Psoas muscle (tissue), 8 donors: ENCODE measurements at regions of chr7 and their contacts with region 1.

Region 1: GRCh38 chr7:76997381-76997780 is 34.8 kb downstream of the SPDYE17 start:
- DNase-seq: no peak
- ATAC-seq: peak; percentile 21 to 39 (median 26)
- H3K4me3 ChIP-seq: no peak overlapping the region
- H3K27ac ChIP-seq: no peak overlapping the region
- H3K4me1 ChIP-seq: no peaks in the 10 kb centered on the region
- H3K27me3 ChIP-seq: no peaks in the 10 kb centered on the region
- CTCF ChIP-seq: no peak

Region 2: DNA sequence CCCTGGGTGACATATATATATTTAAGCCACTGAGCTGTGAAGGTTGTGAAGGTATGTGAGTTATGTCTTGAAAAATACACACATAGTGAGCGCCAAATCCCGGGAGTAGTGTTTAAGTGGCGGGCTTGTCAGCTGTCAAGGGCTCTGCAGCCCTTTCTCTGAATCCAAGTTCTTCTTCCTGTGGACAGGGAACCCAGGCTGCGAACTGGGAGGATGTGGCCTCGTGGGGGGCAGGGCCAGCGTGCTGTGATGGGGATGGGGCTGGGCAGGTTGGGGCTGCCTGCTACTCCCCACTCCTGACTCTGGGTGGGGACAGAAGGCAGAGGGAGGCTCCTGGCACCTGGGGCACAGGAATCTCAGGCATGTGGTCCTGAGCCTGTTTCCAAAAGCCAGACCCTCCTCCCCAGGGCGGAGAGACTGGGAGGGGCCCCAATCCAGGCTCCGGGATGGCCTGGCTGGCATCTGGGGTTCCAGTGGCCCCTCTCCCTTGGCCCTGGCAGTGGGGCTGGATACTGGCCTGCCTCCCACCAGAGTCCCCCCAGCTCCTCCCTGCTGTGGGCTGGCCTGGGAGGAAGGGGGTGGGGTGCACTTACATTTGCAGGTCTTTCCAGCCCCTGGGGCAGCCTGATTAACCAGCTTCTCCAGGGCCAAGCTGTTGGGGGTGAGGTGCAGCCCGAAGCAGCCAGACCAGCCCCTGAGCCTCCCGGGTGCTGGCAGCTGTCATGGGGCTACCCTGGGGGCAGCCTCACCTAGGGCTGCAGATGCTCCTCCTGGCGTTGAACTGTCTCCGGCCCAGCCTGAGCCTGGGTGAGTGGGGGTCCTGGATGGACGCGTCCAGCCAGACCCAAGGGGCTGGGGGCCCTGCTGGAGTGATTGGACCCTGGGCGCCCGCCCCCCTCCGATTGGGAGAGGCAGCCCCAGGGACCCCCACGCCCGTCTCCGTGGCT is 487.2 kb before region 1 on chr7 and contains the start of gene UPK3B:
- intact Hi-C with region 1: loop called in 1 of 2 experiments (anchors 10 kb)
- DNase-seq: peak in 1 of 2 donors; percentile 55
- ATAC-seq: peak in 3 of 4 donors; percentile 15 to 16 (median 16)
- H3K4me3 ChIP-seq: no peak within 1 kb of the TSS
- H3K27ac ChIP-seq: no peak within 1 kb of the TSS
- H3K4me1 ChIP-seq: no peaks in the 10 kb centered on the region
- H3K27me3 ChIP-seq: no peaks in the 10 kb centered on the region
- CTCF ChIP-seq: no peak
- total RNA-seq, gene UPK3B: 0.48 to 0.91 (median 0.77) TPM in 3 of 4 donors, not detected in the other